Sigmoid colon (tissue), 7 donors: ENCODE measurements at regions of chr4 and their contacts with region 1.

Region 1: DNA sequence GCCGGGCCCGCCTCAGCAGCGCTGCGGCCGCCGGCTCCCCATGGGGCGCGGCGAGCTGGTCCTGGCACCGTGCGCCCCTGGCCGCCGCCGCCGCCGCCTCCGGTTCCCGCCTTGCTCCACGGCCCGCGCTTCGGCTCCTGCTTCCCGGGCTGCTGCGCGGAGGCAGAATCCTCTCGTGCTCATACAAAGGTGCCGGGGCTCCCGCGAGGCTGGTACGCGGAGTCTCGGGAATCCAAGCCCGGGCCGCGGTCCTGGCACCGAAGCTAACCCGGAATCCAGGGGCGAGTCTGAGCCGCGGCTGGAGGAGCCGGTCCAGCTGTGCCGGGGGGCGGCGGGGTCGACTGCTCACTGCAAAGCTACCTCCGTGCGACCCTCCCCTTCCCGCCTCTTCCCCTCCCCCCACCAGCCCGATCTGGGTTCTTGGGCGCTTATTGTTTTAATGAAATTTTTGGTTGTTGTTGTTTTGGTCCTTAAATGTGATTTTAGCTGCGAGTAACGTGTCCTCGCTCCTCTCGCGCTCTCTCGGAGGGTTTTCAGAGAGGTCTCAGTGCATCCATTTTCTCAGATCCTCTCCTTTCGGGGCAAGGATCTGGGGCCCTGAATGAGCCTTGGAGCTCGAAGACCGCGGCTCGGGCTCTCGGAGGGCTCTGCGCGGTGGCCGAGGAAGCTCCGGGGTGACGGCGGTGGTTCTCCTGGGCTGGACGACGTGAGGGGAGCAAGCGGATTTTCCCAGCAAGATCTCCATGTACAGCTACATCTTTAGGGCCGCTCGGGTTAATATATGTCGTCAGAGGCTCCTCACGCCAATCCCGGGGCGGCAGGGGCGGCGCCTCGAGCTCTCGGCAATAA is at the start of gene HAND2:
- DNase-seq: peak; percentile 97
- H3K4me3 ChIP-seq: peak within 1 kb of the TSS; percentile 90 to 98 (median 95)
- H3K27ac ChIP-seq: peak within 1 kb of the TSS; percentile 98 to 99 (median 99)
- H3K4me1 ChIP-seq: peaks cover 0 to 13% (median 5%) of the 10 kb centered on the region in 4 donors
- H3K27me3 ChIP-seq: no peaks in the 10 kb centered on the region
- CTCF ChIP-seq: no peak
- EP300 ChIP-seq: peak in 1 of 4 donors; percentile 51
- POLR2A ChIP-seq: peak; percentile 96 to 99
- total RNA-seq, gene HAND2: 141 to 224 (median 180) TPM

Region 2: GRCh38 chr4:172996571-172997216 is 533.0 kb before region 1 on chr4:
- intact Hi-C with region 1: no loop called
- DNase-seq: no peak
- H3K4me3 ChIP-seq: no peak overlapping the region
- H3K27ac ChIP-seq: no peak overlapping the region
- H3K4me1 ChIP-seq: peaks cover 0 to 22% (median 4%) of the 10 kb centered on the region in 4 donors
- H3K27me3 ChIP-seq: no peaks in the 10 kb centered on the region
- CTCF ChIP-seq: no peak
- EP300 ChIP-seq: no peak
- POLR2A ChIP-seq: no peak

Region 3: DNA sequence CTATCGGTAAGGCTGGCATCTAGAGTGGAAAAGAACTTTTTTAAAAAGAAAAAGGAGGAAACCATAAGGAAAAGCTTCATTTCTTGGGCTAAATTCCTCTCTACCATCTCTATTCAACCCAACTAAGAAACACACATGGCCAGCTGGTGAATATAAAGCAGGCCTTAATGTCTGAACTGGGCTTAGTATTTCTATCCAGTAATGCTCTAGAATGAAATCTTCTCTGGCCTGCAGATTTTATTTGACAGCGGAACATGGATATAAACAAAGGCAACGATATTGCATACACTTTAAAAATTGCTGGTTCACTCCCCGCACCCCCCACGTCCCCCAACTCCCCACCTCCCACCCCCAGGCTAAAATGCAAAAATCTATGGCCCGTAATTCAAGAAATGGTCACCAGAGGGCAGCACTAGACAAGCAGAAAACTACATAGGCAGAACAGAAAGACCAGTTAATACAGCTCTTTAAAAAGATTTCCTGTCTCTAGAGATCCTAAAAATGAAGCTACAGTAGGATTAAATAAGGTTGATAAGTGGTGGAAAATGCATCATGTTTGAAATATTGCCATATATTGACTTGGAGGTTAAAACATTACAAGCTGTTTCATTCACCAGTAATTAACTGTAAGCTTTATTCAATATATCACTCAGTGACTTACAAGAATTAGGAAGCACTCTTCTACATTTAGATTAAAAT is 516.3 kb before region 1 on chr4:
- intact Hi-C with region 1: no loop called
- DNase-seq: no peak
- H3K4me3 ChIP-seq: no peak overlapping the region
- H3K27ac ChIP-seq: no peak overlapping the region
- H3K4me1 ChIP-seq: no peaks in the 10 kb centered on the region
- H3K27me3 ChIP-seq: no peaks in the 10 kb centered on the region
- CTCF ChIP-seq: peak; percentile 19 to 82 (median 45)
- EP300 ChIP-seq: no peak
- POLR2A ChIP-seq: no peak

Region 4: DNA sequence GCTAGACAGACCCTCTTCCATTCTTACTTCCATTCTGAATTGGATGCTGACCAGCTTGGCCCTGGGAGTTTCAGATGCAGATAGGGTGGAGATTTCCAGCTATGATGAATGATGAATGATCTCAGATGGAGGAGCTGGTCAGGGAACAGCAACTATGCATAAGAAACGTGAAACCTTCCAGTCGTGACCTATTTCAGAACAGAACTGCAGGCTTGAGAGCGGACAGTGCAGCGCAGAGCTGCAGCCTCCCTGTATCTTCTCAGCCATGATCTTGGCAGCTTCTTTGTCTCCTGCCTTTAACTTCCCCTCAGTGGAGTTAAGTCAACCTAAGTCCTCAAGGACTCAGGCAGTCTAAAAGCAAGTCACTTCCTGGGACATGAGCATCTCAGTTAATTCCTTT is 43.6 kb after region 1 on chr4:
- intact Hi-C with region 1: loop called (anchors 2 kb)
- DNase-seq: peak; percentile 77
- H3K4me3 ChIP-seq: no peak overlapping the region
- H3K27ac ChIP-seq: peak overlapping the region; percentile 54 to 74 (median 64)
- H3K4me1 ChIP-seq: peaks cover 0 to 67% (median 47%) of the 10 kb centered on the region in 4 donors
- H3K27me3 ChIP-seq: no peaks in the 10 kb centered on the region
- CTCF ChIP-seq: no peak
- EP300 ChIP-seq: peak in 1 of 4 donors; percentile 35
- POLR2A ChIP-seq: no peak

Region 5: DNA sequence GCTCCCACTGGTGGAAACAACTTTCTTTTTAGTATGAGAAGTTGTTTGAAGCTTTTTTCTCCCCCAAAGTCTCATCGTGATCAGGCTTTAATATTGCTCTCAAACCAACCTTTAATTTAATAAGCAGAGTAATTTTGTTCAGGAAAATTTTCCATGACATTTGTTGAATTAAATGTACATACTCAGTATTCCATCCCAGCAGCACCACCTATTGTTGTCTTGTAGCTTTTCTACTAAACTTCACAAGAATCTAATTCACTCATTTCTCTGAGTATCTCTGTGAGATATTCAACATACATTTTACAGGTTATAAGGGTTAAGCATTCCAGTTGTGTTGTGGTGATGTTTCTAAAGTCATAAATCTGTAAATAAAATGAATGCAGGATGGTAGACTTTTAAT is 218.7 kb after region 1 on chr4:
- intact Hi-C with region 1: loop called (anchors 10 kb)
- DNase-seq: no peak
- H3K4me3 ChIP-seq: no peak overlapping the region
- H3K27ac ChIP-seq: peak overlapping the region in 3 of 4 donors; percentile 4 to 42 (median 16)
- H3K4me1 ChIP-seq: peaks cover 0 to 32% (median 17%) of the 10 kb centered on the region in 4 donors
- H3K27me3 ChIP-seq: no peaks in the 10 kb centered on the region
- CTCF ChIP-seq: peak in 1 of 4 experiments; percentile 22
- EP300 ChIP-seq: no peak
- POLR2A ChIP-seq: no peak

Region 6: DNA sequence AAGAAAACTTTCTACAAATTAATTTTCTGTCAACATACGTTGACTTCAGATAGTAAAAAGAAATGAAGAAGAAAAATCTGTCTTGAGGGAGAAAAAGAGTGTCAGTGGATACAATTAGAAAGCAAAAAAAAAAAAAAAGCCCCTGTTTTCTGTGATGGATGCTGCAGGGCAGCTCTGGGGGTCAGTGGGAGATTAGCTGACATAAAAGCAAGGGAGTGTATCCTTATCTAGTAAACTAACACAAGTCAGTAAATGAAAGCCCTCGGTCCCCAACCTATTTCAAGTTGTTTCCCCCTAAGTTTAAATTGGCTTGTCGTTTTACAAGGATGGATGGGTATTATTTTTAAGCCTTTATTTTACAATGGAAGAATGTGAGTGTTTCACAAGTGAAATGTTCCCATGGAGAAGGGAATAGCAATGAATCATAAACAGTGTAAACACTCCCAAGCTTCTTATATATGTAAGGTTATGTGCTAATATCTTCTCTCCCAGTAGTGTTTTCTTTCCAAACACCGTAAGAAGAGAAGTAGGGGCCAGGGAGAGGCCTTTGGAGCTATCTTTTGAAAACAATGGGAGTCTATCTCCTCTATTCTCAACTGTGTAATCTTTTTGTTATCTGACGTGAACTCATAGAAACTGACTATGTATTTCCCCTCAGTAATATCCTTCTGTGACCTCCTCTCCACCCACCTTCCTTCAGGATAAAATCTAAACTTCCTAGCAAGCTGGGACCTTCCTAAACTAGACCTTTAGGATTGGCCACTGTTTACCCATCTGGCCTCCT is 406.1 kb after region 1 on chr4:
- intact Hi-C with region 1: loop called (anchors 10 kb)
- DNase-seq: no peak
- H3K4me3 ChIP-seq: no peak overlapping the region
- H3K27ac ChIP-seq: peak overlapping the region; percentile 70 to 81 (median 73)
- H3K4me1 ChIP-seq: peaks cover 0 to 50% (median 43%) of the 10 kb centered on the region in 4 donors
- H3K27me3 ChIP-seq: no peaks in the 10 kb centered on the region
- CTCF ChIP-seq: no peak
- EP300 ChIP-seq: peak in 3 of 4 donors; percentile 4 to 58 (median 32)
- POLR2A ChIP-seq: no peak

Region 7: GRCh38 chr4:173990126-173990868 is 460.6 kb after region 1 on chr4:
- intact Hi-C with region 1: loop called (anchors 5 kb)
- DNase-seq: no peak
- H3K4me3 ChIP-seq: no peak overlapping the region
- H3K27ac ChIP-seq: peak overlapping the region; percentile 43 to 73 (median 63)
- H3K4me1 ChIP-seq: peaks cover 0 to 42% (median 28%) of the 10 kb centered on the region in 4 donors
- H3K27me3 ChIP-seq: no peaks in the 10 kb centered on the region
- CTCF ChIP-seq: peak; percentile 48 to 67 (median 56)
- EP300 ChIP-seq: no peak
- POLR2A ChIP-seq: no peak